Activated naive CD4-positive, alpha-beta T cell treated with anti-CD3 and anti-CD28 coated beads, Interleukin-2, amount 10 ng/mL, durations not matched to agents 7 days and 5 days (primary cell): ENCODE measurements at regions of chr7 and their contacts with region 1.

Region 1: DNA sequence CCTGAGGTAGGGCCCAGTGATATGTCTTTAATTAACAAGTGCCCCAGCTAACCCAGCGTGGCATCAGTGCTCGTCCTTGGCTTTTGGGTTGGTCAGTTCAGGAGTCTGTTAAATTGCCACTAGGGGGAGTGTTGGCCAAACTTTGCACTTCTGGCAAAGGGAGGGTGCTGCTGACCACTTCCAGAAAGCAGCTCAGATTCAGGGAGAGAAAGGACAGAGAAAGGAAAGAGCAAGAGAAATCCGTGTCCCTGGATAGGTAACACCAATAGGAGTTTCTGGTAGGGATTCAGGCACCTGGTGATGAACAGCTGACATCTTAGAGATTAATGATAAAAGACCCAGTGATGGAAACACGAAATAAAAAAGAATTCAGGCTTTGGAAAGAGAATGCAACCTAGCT is 243.1 kb upstream of the AOAH start:
- DNase-seq: no peak
- H3K4me3 Mint-ChIP-seq: no peak overlapping the region
- H3K27ac Mint-ChIP-seq: no peak overlapping the region
- H3K4me1 Mint-ChIP-seq: peaks cover 27% of the 10 kb centered on the region
- H3K27me3 Mint-ChIP-seq: no peaks in the 10 kb centered on the region

Region 2: GRCh38 chr7:36979810-36980248 is 12.4 kb after region 1 on chr7:
- CTCF ChIA-PET with region 1: interaction called, 12 read pairs
- DNase-seq: no peak
- H3K4me3 Mint-ChIP-seq: no peak overlapping the region
- H3K27ac Mint-ChIP-seq: no peak overlapping the region
- H3K4me1 Mint-ChIP-seq: peaks cover 5% of the 10 kb centered on the region
- H3K27me3 Mint-ChIP-seq: no peaks in the 10 kb centered on the region